ENCODE measurements at regions of chr1 and their contacts with region 1.

Region 1: GRCh38 chr1:161827786-161828185 is 61.7 kb downstream of the ATF6 start:
- DNase-seq: no peak
- ATAC-seq: no peak
- H3K4me3 ChIP-seq: no peak overlapping the region
- H3K4me3 Mint-ChIP-seq: no peak overlapping the region
- H3K27ac ChIP-seq: no peak overlapping the region
- H3K27ac Mint-ChIP-seq: no peak overlapping the region
- H3K4me1 ChIP-seq: peaks cover 0 to 2% of the 10 kb centered on the region in 2 experiments
- H3K4me1 Mint-ChIP-seq: peaks cover 10 to 14% (median 11%) of the 10 kb centered on the region in 3 donors
- H3K27me3 ChIP-seq: no peaks in the 10 kb centered on the region
- H3K27me3 Mint-ChIP-seq: no peaks in the 10 kb centered on the region

Region 2: DNA sequence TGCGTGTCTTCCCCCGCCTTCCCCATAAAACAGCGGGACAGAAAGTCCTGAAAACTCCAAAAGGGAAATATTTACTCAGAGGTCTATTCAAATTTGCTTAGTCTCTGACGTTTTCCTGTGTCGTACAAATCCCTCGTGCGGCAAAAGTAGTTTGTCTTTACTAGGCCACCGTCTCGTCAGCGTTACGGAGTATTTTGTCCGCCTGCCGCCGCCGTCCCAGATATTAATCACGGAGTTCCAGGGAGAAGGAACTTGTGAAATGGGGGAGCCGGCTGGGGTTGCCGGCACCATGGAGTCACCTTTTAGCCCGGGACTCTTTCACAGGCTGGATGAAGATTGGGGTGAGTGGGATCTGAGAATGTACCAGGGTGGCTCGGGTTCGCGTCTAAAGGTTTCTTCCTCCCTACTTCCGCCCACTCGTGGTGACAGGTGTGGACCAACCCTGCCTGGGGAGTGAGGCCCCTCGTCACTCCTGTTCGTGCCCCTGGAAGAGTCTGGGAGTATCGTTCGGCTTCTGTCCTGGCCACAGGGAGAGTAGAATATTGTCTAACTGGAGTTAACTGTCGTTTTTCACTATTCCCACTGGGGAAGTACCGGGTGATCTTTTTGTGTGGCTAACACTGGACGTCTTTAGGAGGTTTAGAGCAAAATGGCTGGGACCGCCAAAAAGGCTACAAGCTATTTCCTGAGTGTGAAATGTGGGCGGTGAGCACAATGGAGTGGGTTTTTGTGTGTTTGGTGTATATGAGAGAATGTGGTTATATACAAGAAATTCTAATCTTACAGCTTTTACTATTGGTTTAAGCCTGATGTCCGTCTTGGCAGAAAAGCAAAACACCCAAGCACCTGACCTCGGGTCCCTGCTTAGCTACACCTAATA is 61.4 kb before region 1 on chr1 and contains the start of gene ATF6:
- CTCF ChIA-PET with region 1: no interaction called
- POLR2A ChIA-PET with region 1: no interaction called
- DNase-seq: peak; percentile 63 to 90 (median 73)
- ATAC-seq: peak; percentile 79 to 82 (median 82)
- H3K4me3 ChIP-seq: peak within 1 kb of the TSS; percentile 69 to 97
- H3K4me3 Mint-ChIP-seq: peak within 1 kb of the TSS; percentile 99 to 100 (median 99)
- H3K27ac ChIP-seq: peak within 1 kb of the TSS; percentile 75
- H3K27ac Mint-ChIP-seq: peak within 1 kb of the TSS; percentile 94 to 97
- H3K4me1 ChIP-seq: peaks cover 30 to 35% of the 10 kb centered on the region in 2 experiments
- H3K4me1 Mint-ChIP-seq: peaks cover 42 to 45% (median 45%) of the 10 kb centered on the region in 3 donors
- H3K27me3 ChIP-seq: no peaks in the 10 kb centered on the region
- H3K27me3 Mint-ChIP-seq: no peaks in the 10 kb centered on the region
- total RNA-seq, gene ATF6: 18.7 to 27.6 (median 21.9) TPM

Region 3: DNA sequence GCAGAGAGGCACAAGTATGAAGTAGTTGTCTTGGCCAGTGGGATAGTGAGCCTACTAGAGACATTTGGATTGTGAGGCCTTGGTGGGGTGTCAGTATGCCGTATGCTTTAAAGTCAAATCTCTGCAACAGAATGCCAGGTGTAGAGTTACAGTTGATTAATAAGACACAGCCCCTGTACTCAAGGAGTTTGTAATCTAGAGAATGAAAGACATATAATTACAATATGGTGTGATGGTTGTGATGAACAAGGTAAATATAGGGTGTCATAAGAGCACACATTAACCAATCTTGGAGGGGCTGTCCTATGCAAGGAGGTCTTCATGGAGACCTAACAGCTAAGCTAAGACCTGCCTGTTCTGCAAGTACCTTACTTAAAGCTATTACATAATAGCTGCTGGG is 51.5 kb after region 1 on chr1:
- CTCF ChIA-PET with region 1: no interaction called
- POLR2A ChIA-PET with region 1: interaction called in 1 of 2 experiments, 14 read pairs
- DNase-seq: no peak
- ATAC-seq: no peak
- H3K4me3 ChIP-seq: no peak overlapping the region
- H3K4me3 Mint-ChIP-seq: no peak overlapping the region
- H3K27ac ChIP-seq: no peak overlapping the region
- H3K27ac Mint-ChIP-seq: no peak overlapping the region
- H3K4me1 ChIP-seq: no peaks in the 10 kb centered on the region
- H3K4me1 Mint-ChIP-seq: peaks cover 0 to 9% (median 0%) of the 10 kb centered on the region in 3 donors
- H3K27me3 ChIP-seq: no peaks in the 10 kb centered on the region
- H3K27me3 Mint-ChIP-seq: no peaks in the 10 kb centered on the region